ENCODE measurements at regions of chr19 and their contacts with region 1.

Region 1: DNA sequence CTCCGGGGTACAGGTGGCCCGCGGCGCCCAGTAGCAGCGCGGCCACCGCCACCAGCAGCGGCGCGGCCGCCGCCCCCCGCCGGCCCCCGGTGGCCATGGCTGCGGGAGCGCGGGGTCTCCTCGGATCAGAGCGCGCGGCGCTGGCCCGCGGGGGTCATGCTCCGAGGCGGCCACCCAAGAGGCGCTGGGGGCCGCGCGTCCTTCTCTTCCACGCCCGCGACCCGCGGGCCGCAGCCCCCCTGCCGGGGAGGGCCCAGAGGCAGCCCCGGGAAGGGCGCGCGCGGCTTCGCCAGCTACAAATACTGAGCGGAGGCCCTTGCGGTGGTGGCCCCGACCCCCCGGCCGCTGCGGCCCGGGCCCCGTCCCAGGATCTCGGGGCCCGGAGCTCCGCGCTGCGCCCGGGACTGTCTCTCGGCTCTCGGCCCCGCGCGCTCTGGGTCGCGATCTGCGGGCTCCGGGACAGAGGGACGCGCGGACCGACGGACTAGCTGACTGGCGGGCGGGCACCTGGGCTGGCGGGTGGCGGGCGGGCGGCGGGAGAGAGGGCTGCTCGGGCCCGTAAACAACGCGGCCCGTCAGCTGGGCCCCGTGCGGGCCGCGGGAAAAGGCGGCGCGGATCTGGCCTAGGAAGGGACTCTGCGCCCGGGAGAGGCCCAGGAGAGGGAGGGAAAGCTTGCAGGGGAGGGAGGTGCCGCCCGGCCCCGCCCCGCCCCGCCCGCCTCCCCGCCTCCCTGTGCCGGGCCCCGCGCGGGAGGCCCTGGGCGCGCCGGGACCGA is at the start of gene INSR:
- DNase-seq: peak; percentile 54
- ATAC-seq: peak; percentile 82
- H3K4me3 ChIP-seq: peak within 1 kb of the TSS; percentile 94
- H3K27ac ChIP-seq: peak within 1 kb of the TSS; percentile 74
- H3K4me1 ChIP-seq: peaks cover 13% of the 10 kb centered on the region
- H3K27me3 ChIP-seq: no peaks in the 10 kb centered on the region
- CTCF ChIP-seq: no peak
- EP300 ChIP-seq: no peak
- POLR2A ChIP-seq: peak; percentile 66
- RAD21 ChIP-seq: peak; percentile 19; the same call in 1 of the 2 replicates
- polyA plus RNA-seq, gene INSR: 4.2 to 8.0 TPM

Region 2: DNA sequence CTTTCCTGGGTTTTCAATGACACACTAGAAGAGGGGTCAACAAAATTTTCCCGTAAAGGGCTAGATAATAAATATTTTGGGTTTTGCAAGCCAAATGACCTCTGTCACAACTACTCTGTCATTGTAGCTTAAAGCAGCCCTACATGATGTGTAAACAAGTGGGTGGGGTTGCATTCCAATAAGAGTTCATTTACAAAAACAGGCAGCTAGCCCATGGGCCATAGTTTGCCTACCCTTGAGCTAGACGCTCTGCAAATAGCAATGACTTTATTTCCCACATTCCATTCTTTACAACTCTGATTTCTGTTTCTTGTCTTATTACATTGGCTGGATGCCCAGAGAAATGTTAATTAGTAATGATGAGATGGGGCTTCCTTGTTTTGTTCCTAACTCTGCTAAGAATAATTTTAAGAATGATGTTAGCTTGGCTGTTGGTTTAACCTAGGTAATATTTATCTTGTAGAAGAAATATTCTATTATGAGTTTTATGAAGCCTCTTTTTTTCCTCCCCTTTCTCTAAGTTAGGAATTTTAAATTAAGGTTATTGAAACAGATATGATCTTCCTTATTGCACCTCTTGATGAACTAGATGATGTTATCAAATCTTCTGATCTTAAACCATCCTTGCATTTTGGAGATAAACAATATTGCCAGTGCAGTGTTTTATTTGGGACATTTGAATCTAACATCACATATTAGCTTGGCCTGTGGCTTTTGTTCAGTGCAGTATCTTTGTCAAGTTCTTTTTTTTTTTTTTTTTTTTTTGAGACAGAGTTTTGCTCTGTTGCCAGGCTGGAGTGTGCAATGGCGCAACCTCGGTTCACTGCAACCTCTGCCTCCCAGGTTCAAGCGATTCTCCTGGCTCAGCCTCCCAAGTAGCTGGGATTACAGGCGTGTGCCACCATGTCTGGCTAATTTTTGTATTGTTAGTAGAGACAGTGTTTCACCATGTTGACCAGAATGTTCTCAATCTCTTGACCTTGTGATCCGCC is 148.2 kb before region 1 on chr19:
- CTCF ChIA-PET with region 1: interaction called, 5 read pairs
- POLR2A ChIA-PET with region 1: no interaction called
- RAD21 ChIA-PET with region 1: no interaction called
- SMC1A ChIA-PET with region 1: no interaction called
- in situ Hi-C with region 1: no loop called
- intact Hi-C with region 1: loop called (anchors 2 kb)
- DNase-seq: no peak
- ATAC-seq: no peak
- H3K4me3 ChIP-seq: no peak overlapping the region
- H3K27ac ChIP-seq: no peak overlapping the region
- H3K4me1 ChIP-seq: no peaks in the 10 kb centered on the region
- H3K27me3 ChIP-seq: no peaks in the 10 kb centered on the region
- CTCF ChIP-seq: no peak
- EP300 ChIP-seq: no peak
- POLR2A ChIP-seq: no peak
- RAD21 ChIP-seq: no peak

Region 3: GRCh38 chr19:7211204-7211951 is 82.6 kb before region 1 on chr19:
- CTCF ChIA-PET with region 1: interaction called, 3 read pairs
- POLR2A ChIA-PET with region 1: interaction called, 7 read pairs
- RAD21 ChIA-PET with region 1: interaction called, 3 read pairs
- SMC1A ChIA-PET with region 1: interaction called, 3 read pairs
- in situ Hi-C with region 1: no loop called
- intact Hi-C with region 1: loop called (anchors 5 kb)
- DNase-seq: no peak
- ATAC-seq: no peak
- H3K4me3 ChIP-seq: no peak overlapping the region
- H3K27ac ChIP-seq: no peak overlapping the region
- H3K4me1 ChIP-seq: peaks cover 55% of the 10 kb centered on the region
- H3K27me3 ChIP-seq: no peaks in the 10 kb centered on the region
- CTCF ChIP-seq: no peak
- EP300 ChIP-seq: no peak
- POLR2A ChIP-seq: no peak
- RAD21 ChIP-seq: no peak

Region 4: DNA sequence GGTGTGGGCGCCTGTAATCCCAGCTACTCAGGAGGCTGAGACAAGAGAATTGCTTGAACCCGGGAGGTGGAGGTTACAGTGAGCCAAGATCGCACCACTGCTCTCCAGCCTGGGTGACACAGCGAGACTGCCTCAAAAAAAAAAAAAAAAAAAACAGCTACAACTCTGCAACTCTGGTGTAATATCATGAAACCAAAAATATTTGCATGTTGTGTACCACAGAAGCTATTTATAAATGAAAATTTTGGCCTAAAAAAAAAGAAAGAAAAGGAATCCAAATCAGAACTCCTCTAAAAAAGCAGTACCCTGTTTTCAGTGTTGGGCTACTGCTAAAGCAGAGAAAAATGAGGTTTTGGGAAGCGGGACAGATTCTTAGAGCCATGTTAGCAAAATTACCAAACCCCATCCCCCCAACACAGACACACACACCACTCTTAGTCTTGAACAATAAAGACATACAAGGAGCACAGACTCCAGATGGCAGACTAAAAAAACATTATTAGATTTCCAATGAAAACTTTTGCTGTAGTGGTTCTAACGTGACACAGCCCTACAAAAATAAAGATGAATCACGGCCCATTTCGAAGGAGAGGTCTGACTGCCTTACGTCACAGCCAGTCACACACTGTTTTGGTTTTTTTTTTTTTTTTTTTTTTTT is 51.3 kb before region 1 on chr19:
- CTCF ChIA-PET with region 1: no interaction called
- POLR2A ChIA-PET with region 1: interaction called, 7 read pairs
- RAD21 ChIA-PET with region 1: interaction called, 10 read pairs
- SMC1A ChIA-PET with region 1: interaction called, 9 read pairs
- in situ Hi-C with region 1: no loop called
- intact Hi-C with region 1: loop called (anchors 2 kb)
- DNase-seq: peak; percentile 77
- ATAC-seq: peak; percentile 91
- H3K4me3 ChIP-seq: peak overlapping the region; percentile 56; the same call in 1 of the 2 replicates
- H3K27ac ChIP-seq: peak overlapping the region; percentile 96
- H3K4me1 ChIP-seq: peaks cover 26% of the 10 kb centered on the region
- H3K27me3 ChIP-seq: no peaks in the 10 kb centered on the region
- CTCF ChIP-seq: peak in 1 of 3 experiments; percentile 12; a peak in 1 of 6 replicates
- EP300 ChIP-seq: no peak
- POLR2A ChIP-seq: no peak
- RAD21 ChIP-seq: 0 out of 2 replicates have a peak, but pooled peaks have one; percentile 5

Region 5: GRCh38 chr19:7272856-7273578 is 21.0 kb before region 1 on chr19:
- CTCF ChIA-PET with region 1: interaction called, 7 read pairs
- POLR2A ChIA-PET with region 1: interaction called, 8 read pairs
- RAD21 ChIA-PET with region 1: interaction called, 6 read pairs
- SMC1A ChIA-PET with region 1: interaction called, 12 read pairs
- in situ Hi-C with region 1: no loop called
- intact Hi-C with region 1: no loop called
- DNase-seq: peak; percentile 64
- ATAC-seq: peak; percentile 97
- H3K4me3 ChIP-seq: peak overlapping the region; percentile 9; the same call in 1 of the 2 replicates
- H3K27ac ChIP-seq: peak overlapping the region; percentile 79
- H3K4me1 ChIP-seq: peaks cover 27% of the 10 kb centered on the region
- H3K27me3 ChIP-seq: no peaks in the 10 kb centered on the region
- CTCF ChIP-seq: no peak
- EP300 ChIP-seq: peak in 1 of 2 experiments; percentile 75; a peak in 2 of 4 replicates
- POLR2A ChIP-seq: no peak
- RAD21 ChIP-seq: no peak

Region 6: DNA sequence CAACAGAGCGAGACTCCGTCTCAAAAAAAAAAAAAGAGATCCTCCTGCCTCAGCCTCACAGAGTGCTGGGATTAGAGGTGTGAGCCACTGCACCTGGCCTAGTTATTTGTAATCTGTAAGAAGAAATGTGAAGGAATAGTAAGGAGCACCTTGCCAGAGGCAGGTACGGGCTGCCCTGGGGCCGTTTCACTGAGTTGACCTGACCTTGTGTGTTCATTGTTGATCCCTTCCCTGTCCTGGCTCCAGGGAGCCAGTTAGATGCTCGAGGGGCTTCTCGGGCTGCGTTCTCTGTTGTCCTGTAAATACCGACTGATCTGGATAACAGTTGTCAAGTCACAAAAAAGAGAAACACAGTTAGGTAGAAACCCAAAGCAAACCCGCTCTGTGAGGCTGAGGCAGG is 110.1 kb after region 1 on chr19:
- CTCF ChIA-PET with region 1: no interaction called
- POLR2A ChIA-PET with region 1: no interaction called
- RAD21 ChIA-PET with region 1: no interaction called
- SMC1A ChIA-PET with region 1: no interaction called
- in situ Hi-C with region 1: no loop called
- intact Hi-C with region 1: no loop called
- DNase-seq: no peak
- ATAC-seq: no peak
- H3K4me3 ChIP-seq: no peak overlapping the region
- H3K27ac ChIP-seq: no peak overlapping the region
- H3K4me1 ChIP-seq: peaks cover 16% of the 10 kb centered on the region
- H3K27me3 ChIP-seq: no peaks in the 10 kb centered on the region
- CTCF ChIP-seq: no peak
- EP300 ChIP-seq: no peak
- POLR2A ChIP-seq: no peak
- RAD21 ChIP-seq: no peak

Region 7: GRCh38 chr19:7417671-7418324 is 123.8 kb after region 1 on chr19:
- CTCF ChIA-PET with region 1: no interaction called
- POLR2A ChIA-PET with region 1: no interaction called
- RAD21 ChIA-PET with region 1: no interaction called
- SMC1A ChIA-PET with region 1: no interaction called
- in situ Hi-C with region 1: no loop called
- intact Hi-C with region 1: no loop called
- DNase-seq: no peak
- ATAC-seq: no peak
- H3K4me3 ChIP-seq: no peak overlapping the region
- H3K27ac ChIP-seq: no peak overlapping the region
- H3K4me1 ChIP-seq: no peaks in the 10 kb centered on the region
- H3K27me3 ChIP-seq: no peaks in the 10 kb centered on the region
- CTCF ChIP-seq: no peak
- EP300 ChIP-seq: no peak
- POLR2A ChIP-seq: no peak
- RAD21 ChIP-seq: no peak

Region 8: GRCh38 chr19:7442423-7442822 is 148.4 kb after region 1 on chr19:
- CTCF ChIA-PET with region 1: no interaction called
- POLR2A ChIA-PET with region 1: no interaction called
- RAD21 ChIA-PET with region 1: no interaction called
- SMC1A ChIA-PET with region 1: no interaction called
- in situ Hi-C with region 1: no loop called
- intact Hi-C with region 1: no loop called
- DNase-seq: no peak
- ATAC-seq: no peak
- H3K4me3 ChIP-seq: no peak overlapping the region
- H3K27ac ChIP-seq: no peak overlapping the region
- H3K4me1 ChIP-seq: no peaks in the 10 kb centered on the region
- H3K27me3 ChIP-seq: no peaks in the 10 kb centered on the region
- CTCF ChIP-seq: no peak
- EP300 ChIP-seq: no peak
- POLR2A ChIP-seq: no peak
- RAD21 ChIP-seq: no peak

Measured in GM12878 (cell line).